ENCODE measurements at regions of chr4 and their contacts with region 1.

Region 1: GRCh38 chr4:77156533-77156911 is 485 bp upstream of the CCNG2 start:
- DNase-seq: peak; percentile 95
- ATAC-seq: peak; percentile 98
- H3K4me3 Mint-ChIP-seq: peak overlapping the region; percentile 97
- H3K27ac Mint-ChIP-seq: peak overlapping the region; percentile 97
- H3K4me1 Mint-ChIP-seq: peaks cover 31% of the 10 kb centered on the region
- H3K27me3 Mint-ChIP-seq: no peaks in the 10 kb centered on the region

Region 2: GRCh38 chr4:75673027-75673958 is 1483.2 kb before region 1 on chr4 and contains the start of gene G3BP2:
- CTCF ChIA-PET with region 1: no interaction called
- POLR2A ChIA-PET with region 1: no interaction called
- intact Hi-C with region 1: loop called in 1 of 2 experiments (anchors 10 kb)
- DNase-seq: peak; percentile 98
- ATAC-seq: peak; percentile 96
- H3K4me3 Mint-ChIP-seq: peak within 1 kb of the TSS; percentile 98
- H3K27ac Mint-ChIP-seq: peak within 1 kb of the TSS; percentile 96
- H3K4me1 Mint-ChIP-seq: peaks cover 39% of the 10 kb centered on the region
- H3K27me3 Mint-ChIP-seq: no peaks in the 10 kb centered on the region
- total RNA-seq, gene G3BP2: 127 to 137 TPM

Region 3: GRCh38 chr4:76148142-76148865 is 1008.2 kb before region 1 on chr4 and contains the start of gene NUP54:
- CTCF ChIA-PET with region 1: no interaction called
- POLR2A ChIA-PET with region 1: no interaction called
- intact Hi-C with region 1: loop called in 1 of 2 experiments (anchors 2 kb)
- DNase-seq: peak; percentile 97
- ATAC-seq: peak; percentile 97
- H3K4me3 Mint-ChIP-seq: peak within 1 kb of the TSS; percentile 86
- H3K27ac Mint-ChIP-seq: peak within 1 kb of the TSS; percentile 89
- H3K4me1 Mint-ChIP-seq: peaks cover 25% of the 10 kb centered on the region
- H3K27me3 Mint-ChIP-seq: no peaks in the 10 kb centered on the region
- total RNA-seq, gene NUP54: 58.2 to 67.3 TPM

Region 4: GRCh38 chr4:76758290-76758882 is 398.1 kb before region 1 on chr4:
- CTCF ChIA-PET with region 1: no interaction called
- POLR2A ChIA-PET with region 1: no interaction called
- intact Hi-C with region 1: no loop called
- DNase-seq: no peak
- ATAC-seq: no peak
- H3K4me3 Mint-ChIP-seq: no peak overlapping the region
- H3K27ac Mint-ChIP-seq: no peak overlapping the region
- H3K4me1 Mint-ChIP-seq: peaks cover 14% of the 10 kb centered on the region
- H3K27me3 Mint-ChIP-seq: peaks cover 11% of the 10 kb centered on the region

Region 5: DNA sequence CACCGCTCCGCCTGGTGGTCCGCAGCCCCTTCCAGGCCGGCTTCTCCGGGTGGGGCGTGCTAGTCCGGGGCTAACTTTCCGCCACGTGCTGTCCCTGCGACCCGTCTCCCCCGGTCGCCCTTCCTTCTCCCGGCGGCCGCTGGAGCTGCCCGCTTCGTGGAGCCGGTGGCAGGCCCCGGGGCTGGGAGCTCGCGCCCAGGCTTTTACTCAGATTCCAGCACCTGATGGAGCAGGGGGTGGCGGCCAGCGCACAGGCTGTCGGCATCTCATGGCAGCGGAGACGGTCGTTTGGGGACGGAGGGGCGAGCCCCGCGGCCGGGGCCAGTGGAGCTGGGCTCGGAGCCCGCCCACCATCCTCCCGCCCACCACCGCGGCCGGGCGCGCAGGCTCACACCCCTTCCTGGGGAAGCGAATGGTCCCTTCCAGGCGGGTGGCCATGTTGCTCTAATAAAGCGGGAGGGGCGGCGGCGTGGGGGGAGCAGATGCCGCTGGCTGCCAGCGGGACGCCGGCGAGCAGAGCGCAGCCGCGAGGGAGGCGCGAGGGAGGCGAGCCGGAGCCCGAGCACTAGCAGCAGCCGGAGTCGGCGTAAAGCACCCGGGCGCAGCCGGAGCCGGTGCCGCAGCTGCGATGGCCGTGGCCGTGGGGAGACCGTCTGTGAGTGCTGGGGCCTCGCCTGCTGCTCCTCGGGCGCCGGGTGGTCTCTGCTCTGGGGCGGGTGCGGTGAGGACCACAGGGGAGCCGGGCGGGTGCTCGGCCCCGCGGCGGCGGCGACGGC is 207.1 kb before region 1 on chr4 and contains the start of gene SEPTIN11:
- CTCF ChIA-PET with region 1: no interaction called
- POLR2A ChIA-PET with region 1: no interaction called
- intact Hi-C with region 1: loop called in 1 of 2 experiments (anchors 1 kb)
- DNase-seq: peak; percentile 86
- ATAC-seq: peak; percentile 72
- H3K4me3 Mint-ChIP-seq: peak within 1 kb of the TSS; percentile 83
- H3K27ac Mint-ChIP-seq: peak within 1 kb of the TSS; percentile 49
- H3K4me1 Mint-ChIP-seq: peaks cover 13% of the 10 kb centered on the region
- H3K27me3 Mint-ChIP-seq: peaks cover 22% of the 10 kb centered on the region
- total RNA-seq, gene SEPTIN11: 15.5 to 34.5 TPM

Region 6: GRCh38 chr4:77203380-77204197 is 47.1 kb after region 1 on chr4:
- CTCF ChIA-PET with region 1: interaction called, 23 read pairs
- POLR2A ChIA-PET with region 1: no interaction called
- intact Hi-C with region 1: no loop called
- DNase-seq: peak; percentile 77
- ATAC-seq: peak; percentile 73
- H3K4me3 Mint-ChIP-seq: no peak overlapping the region
- H3K27ac Mint-ChIP-seq: no peak overlapping the region
- H3K4me1 Mint-ChIP-seq: peaks cover 3% of the 10 kb centered on the region
- H3K27me3 Mint-ChIP-seq: peaks cover 2% of the 10 kb centered on the region

Region 7: GRCh38 chr4:77819843-77820648 is 663.5 kb after region 1 on chr4:
- CTCF ChIA-PET with region 1: no interaction called
- POLR2A ChIA-PET with region 1: no interaction called
- intact Hi-C with region 1: loop called in 1 of 2 experiments (anchors 5 kb)
- DNase-seq: peak; percentile 98
- ATAC-seq: peak; percentile 82
- H3K4me3 Mint-ChIP-seq: peak overlapping the region; percentile 99
- H3K27ac Mint-ChIP-seq: peak overlapping the region; percentile 97
- H3K4me1 Mint-ChIP-seq: peaks cover 46% of the 10 kb centered on the region
- H3K27me3 Mint-ChIP-seq: no peaks in the 10 kb centered on the region

Measured in activated CD4-positive, alpha-beta T cell treated with anti-CD3 and anti-CD28 coated beads for 36 hours (primary cell).